CD8-positive, alpha-beta T cell (primary cell): ENCODE measurements at regions of chr11 and their contacts with region 1.

Region 1: GRCh38 chr11:62705880-62706849 is 1.1 kb downstream of the BSCL2 start:
- DNase-seq: peak; percentile 88 to 98 (median 95)
- ATAC-seq: peak; percentile 61
- H3K4me3 ChIP-seq: peak overlapping the region; percentile 56 to 59
- H3K4me3 Mint-ChIP-seq: peak overlapping the region; percentile 90
- H3K27ac ChIP-seq: peak overlapping the region; percentile 67 to 73
- H3K27ac Mint-ChIP-seq: peak overlapping the region; percentile 88
- H3K4me1 ChIP-seq: peaks cover 44% of the 10 kb centered on the region
- H3K4me1 Mint-ChIP-seq: peaks cover 44% of the 10 kb centered on the region
- H3K27me3 ChIP-seq: no peaks in the 10 kb centered on the region
- H3K27me3 Mint-ChIP-seq: no peaks in the 10 kb centered on the region
- CTCF ChIP-seq: no peak

Region 2: DNA sequence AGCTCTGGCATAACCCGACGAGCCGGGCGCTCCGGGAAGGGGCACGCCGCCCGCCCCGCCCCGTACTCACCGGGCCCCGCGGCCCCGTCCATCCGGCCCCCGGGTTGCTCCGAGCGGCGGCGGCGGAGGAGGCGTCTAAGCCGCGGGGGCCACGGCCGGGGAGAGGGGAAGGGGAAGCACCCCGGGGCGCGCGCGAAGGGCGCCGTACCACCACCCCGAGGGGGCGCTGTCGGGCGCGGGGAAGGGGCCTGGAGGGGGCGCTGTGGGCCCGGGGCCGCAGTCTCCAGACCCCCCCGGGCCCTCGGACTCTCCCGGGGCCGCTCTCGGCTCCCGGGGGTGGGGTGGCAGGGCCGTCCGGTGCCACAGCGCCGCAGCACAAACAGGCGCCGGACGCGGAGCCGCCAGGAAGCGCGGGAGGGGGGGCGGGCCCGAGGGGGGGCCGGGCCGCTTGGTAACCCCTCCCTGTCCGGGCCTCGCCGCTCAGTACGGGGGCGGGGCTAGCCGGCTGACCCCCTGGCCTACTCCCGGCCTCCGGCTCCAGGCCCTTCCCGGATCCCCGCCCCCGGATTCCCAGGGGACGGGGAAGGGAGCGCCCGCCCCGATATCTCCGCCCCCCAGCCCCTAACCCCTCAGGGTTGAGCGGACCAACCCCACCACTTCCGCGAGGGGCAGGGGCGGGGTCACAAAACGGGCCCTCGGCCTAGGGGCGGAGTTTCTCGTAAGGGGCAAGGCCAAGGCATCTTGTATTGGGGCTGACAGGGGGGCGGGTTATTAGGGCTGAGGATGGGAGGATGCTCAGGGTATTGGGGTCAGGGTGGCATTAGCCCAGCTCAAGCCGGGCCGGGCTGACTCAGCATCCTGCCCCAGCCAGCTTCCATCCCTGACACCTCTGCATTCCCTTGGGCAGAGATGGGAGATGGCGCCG is 93.5 kb before region 1 on chr11 and contains the starts of genes EML3 and ROM1:
- CTCF ChIA-PET with region 1: interaction called, 3 read pairs
- POLR2A ChIA-PET with region 1: no interaction called
- intact Hi-C with region 1: loop called in 1 of 2 experiments (anchors 5 kb)
- DNase-seq: peak; percentile 79 to 95 (median 88)
- ATAC-seq: peak; percentile 72
- H3K4me3 ChIP-seq: peak within 1 kb of the TSS; percentile 67 to 97
- H3K4me3 Mint-ChIP-seq: peak within 1 kb of the TSS; percentile 95
- H3K27ac ChIP-seq: peak within 1 kb of the TSS; percentile 91
- H3K27ac Mint-ChIP-seq: peak within 1 kb of the TSS; percentile 99
- H3K4me1 ChIP-seq: peaks cover 38% of the 10 kb centered on the region
- H3K4me1 Mint-ChIP-seq: peaks cover 54% of the 10 kb centered on the region
- H3K27me3 ChIP-seq: no peaks in the 10 kb centered on the region
- H3K27me3 Mint-ChIP-seq: no peaks in the 10 kb centered on the region
- CTCF ChIP-seq: peak; percentile 99
- total RNA-seq, gene EML3: 167 to 189 TPM
- total RNA-seq, gene ROM1: 1.7 to 2.1 TPM

Region 3: GRCh38 chr11:62665075-62665598 is 41.0 kb before region 1 on chr11 and contains the starts of genes C11orf98 and CSKMT:
- CTCF ChIA-PET with region 1: no interaction called
- POLR2A ChIA-PET with region 1: interaction called, 52 read pairs
- intact Hi-C with region 1: loop called (anchors 1 kb)
- DNase-seq: peak; percentile 92 to 98 (median 95)
- ATAC-seq: peak; percentile 87
- H3K4me3 ChIP-seq: peak within 1 kb of the TSS; percentile 95 to 97
- H3K4me3 Mint-ChIP-seq: peak within 1 kb of the TSS; percentile 96
- H3K27ac ChIP-seq: peak within 1 kb of the TSS; percentile 81 to 92
- H3K27ac Mint-ChIP-seq: peak within 1 kb of the TSS; percentile 93
- H3K4me1 ChIP-seq: peaks cover 31% of the 10 kb centered on the region
- H3K4me1 Mint-ChIP-seq: peaks cover 45% of the 10 kb centered on the region
- H3K27me3 ChIP-seq: no peaks in the 10 kb centered on the region
- H3K27me3 Mint-ChIP-seq: no peaks in the 10 kb centered on the region
- CTCF ChIP-seq: no peak
- total RNA-seq, gene C11orf98: 22.5 to 25.7 TPM
- total RNA-seq, gene CSKMT: 25.4 to 25.7 TPM

Region 4: DNA sequence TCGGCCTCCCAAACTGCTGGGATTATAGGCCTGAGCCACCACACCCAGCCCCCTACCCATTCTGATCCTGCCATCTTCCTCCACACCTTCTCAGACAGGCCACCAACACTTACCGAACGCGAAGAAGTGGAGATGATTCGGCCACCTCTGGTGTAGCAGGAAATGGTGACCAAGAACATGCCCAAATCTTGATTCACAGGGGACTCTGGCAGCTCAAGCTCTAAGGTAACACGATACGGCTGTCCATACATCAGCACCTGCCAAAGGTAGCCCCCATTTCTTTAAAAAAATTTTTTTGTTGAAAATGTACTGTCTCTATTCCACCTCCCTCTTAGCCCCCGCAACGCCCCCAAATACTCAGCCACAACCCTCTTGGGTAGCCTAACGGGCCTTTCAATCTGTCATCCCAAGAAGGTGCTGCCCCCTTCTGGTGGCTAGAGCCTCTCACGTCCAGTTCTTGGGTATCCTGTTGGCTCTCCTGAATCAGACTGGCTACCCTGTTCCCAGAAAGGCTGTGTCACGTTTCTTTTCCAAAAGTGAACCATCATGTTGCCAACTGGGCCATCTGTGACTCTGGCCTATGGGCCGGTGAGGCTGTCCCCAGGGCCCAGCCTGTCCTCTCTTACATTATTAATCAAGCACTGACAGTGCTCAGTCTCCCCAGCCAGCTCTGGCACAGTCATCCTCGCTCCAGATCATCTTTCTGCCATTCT is 11.6 kb before region 1 on chr11:
- CTCF ChIA-PET with region 1: interaction called, 27 read pairs
- POLR2A ChIA-PET with region 1: interaction called, 3 read pairs
- intact Hi-C with region 1: no loop called
- DNase-seq: peak; percentile 57 to 88 (median 81)
- ATAC-seq: peak; percentile 91
- H3K4me3 ChIP-seq: no peak overlapping the region
- H3K4me3 Mint-ChIP-seq: no peak overlapping the region
- H3K27ac ChIP-seq: no peak overlapping the region
- H3K27ac Mint-ChIP-seq: no peak overlapping the region
- H3K4me1 ChIP-seq: peaks cover 6% of the 10 kb centered on the region
- H3K4me1 Mint-ChIP-seq: peaks cover 3% of the 10 kb centered on the region
- H3K27me3 ChIP-seq: no peaks in the 10 kb centered on the region
- H3K27me3 Mint-ChIP-seq: no peaks in the 10 kb centered on the region
- CTCF ChIP-seq: peak; percentile 79

Region 5: GRCh38 chr11:62771144-62772021 is 65.2 kb after region 1 on chr11 and contains the start of gene TAF6L:
- CTCF ChIA-PET with region 1: no interaction called
- POLR2A ChIA-PET with region 1: no interaction called
- intact Hi-C with region 1: loop called in 1 of 2 experiments (anchors 1 kb)
- DNase-seq: peak; percentile 74 to 93 (median 87)
- ATAC-seq: peak; percentile 83
- H3K4me3 ChIP-seq: peak within 1 kb of the TSS; percentile 66 to 78
- H3K4me3 Mint-ChIP-seq: peak within 1 kb of the TSS; percentile 91
- H3K27ac ChIP-seq: peak within 1 kb of the TSS; percentile 64 to 83
- H3K27ac Mint-ChIP-seq: peak within 1 kb of the TSS; percentile 94
- H3K4me1 ChIP-seq: peaks cover 22% of the 10 kb centered on the region
- H3K4me1 Mint-ChIP-seq: peaks cover 27% of the 10 kb centered on the region
- H3K27me3 ChIP-seq: no peaks in the 10 kb centered on the region
- H3K27me3 Mint-ChIP-seq: no peaks in the 10 kb centered on the region
- CTCF ChIP-seq: no peak
- total RNA-seq, gene TAF6L: 10.3 to 13.2 TPM

Region 6: GRCh38 chr11:62855571-62856332 is 149.6 kb after region 1 on chr11:
- CTCF ChIA-PET with region 1: interaction called, 4 read pairs
- POLR2A ChIA-PET with region 1: interaction called, 17 read pairs
- intact Hi-C with region 1: loop called in 1 of 2 experiments (anchors 1 kb)
- DNase-seq: peak; percentile 96 to 100 (median 98)
- ATAC-seq: peak; percentile 91
- H3K4me3 ChIP-seq: peak overlapping the region; percentile 82 to 89
- H3K4me3 Mint-ChIP-seq: peak overlapping the region; percentile 96
- H3K27ac ChIP-seq: peak overlapping the region; percentile 76 to 84
- H3K27ac Mint-ChIP-seq: peak overlapping the region; percentile 91
- H3K4me1 ChIP-seq: peaks cover 36% of the 10 kb centered on the region
- H3K4me1 Mint-ChIP-seq: peaks cover 56% of the 10 kb centered on the region
- H3K27me3 ChIP-seq: no peaks in the 10 kb centered on the region
- H3K27me3 Mint-ChIP-seq: no peaks in the 10 kb centered on the region
- CTCF ChIP-seq: no peak